ENCODE measurements at regions of chr2 and their contacts with region 1.

Region 1: DNA sequence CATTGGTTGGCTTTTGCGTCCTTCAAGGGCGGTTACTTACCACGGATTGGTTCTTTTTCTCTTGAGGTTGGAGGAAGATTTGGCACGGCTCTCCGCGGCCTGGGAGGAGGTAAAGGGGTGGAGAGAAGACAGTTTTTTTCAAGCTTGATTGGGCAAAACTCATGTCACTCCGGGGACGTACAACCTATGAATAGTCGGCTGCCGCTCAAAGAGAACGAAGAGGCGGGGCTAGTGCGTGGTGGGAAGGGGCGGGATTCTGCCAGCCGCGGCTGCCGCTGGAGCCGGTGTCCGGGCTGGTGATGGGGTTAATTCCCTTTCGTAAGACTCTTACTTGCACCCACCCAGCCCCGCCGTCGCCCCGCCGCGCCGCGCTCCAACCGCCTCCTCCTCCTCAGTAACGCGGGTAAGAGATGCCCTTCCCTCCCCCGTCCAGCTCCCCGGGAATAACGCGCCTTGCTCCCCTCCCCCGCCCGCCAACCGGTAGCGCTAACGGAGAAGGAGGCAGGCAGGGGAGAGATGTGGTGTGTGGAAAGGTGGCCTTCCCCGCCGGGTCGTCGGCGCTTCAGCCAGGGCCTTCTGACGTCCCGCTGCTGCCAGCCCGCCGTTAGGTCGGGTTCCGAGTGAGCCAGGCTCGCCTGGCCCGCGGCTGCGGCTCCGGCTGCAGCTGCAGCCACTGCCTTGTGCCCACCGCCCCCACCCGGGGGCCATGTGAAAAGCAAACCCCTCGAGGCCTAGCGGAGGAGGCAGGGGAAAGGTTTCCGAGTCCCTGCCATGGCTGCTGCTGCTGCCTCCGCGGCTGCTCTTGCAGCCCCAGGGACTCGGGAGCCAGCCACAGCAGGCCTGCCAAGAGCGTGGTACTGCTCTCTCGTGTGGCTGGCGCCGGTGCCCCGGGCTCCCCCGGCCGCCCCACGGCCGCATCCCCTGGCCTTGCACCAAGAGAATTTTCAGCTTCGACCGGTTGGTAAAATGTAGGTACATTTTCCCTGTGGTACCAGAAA is at the start of gene R3HDM1:
- DNase-seq: peak; percentile 95
- H3K4me3 Mint-ChIP-seq: no peak within 1 kb of the TSS
- H3K27ac Mint-ChIP-seq: peak within 1 kb of the TSS; percentile 83
- H3K4me1 Mint-ChIP-seq: peaks cover 17% of the 10 kb centered on the region
- H3K27me3 Mint-ChIP-seq: no peaks in the 10 kb centered on the region
- total RNA-seq, gene R3HDM1: 63.0 and 64.0 TPM in 2 replicates

Region 2: GRCh38 chr2:134918526-134919340 is 612.8 kb before region 1 on chr2 and contains the start of gene CCNT2:
- intact Hi-C with region 1: loop called (anchors 1 kb)
- DNase-seq: peak; percentile 100
- H3K4me3 Mint-ChIP-seq: peak within 1 kb of the TSS; percentile 96
- H3K27ac Mint-ChIP-seq: peak within 1 kb of the TSS; percentile 97
- H3K4me1 Mint-ChIP-seq: peaks cover 28% of the 10 kb centered on the region
- H3K27me3 Mint-ChIP-seq: peaks cover 11% of the 10 kb centered on the region
- total RNA-seq, gene CCNT2: 41.4 and 43.7 TPM in 2 replicates

Region 3: DNA sequence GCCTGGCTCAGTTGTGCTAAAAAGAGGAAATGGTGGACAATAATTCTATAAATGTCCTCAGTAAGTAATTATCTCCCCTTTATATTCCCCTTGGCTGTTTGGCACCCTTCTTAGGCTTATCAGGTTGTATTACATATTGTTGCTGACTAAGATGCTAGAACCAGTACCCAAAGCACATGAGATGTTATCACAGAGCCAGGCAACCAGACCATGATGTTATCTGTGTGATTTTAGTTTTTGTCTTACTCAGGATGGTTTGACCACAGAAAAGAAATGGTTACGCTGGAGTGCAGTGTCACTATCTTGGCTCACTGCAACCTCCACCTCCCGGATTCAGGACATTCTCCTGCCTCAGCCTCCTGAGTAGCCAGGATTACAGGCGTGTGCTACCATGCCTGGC is 14.9 kb after region 1 on chr2:
- intact Hi-C with region 1: no loop called
- DNase-seq: no peak
- H3K4me3 Mint-ChIP-seq: no peak overlapping the region
- H3K27ac Mint-ChIP-seq: no peak overlapping the region
- H3K4me1 Mint-ChIP-seq: peaks cover 13% of the 10 kb centered on the region
- H3K27me3 Mint-ChIP-seq: no peaks in the 10 kb centered on the region

Region 4: GRCh38 chr2:135664623-135665068 is 133.1 kb after region 1 on chr2:
- intact Hi-C with region 1: loop called (anchors 1 kb)
- DNase-seq: no peak
- H3K4me3 Mint-ChIP-seq: no peak overlapping the region
- H3K27ac Mint-ChIP-seq: peak overlapping the region; percentile 71
- H3K4me1 Mint-ChIP-seq: peaks cover 37% of the 10 kb centered on the region
- H3K27me3 Mint-ChIP-seq: no peaks in the 10 kb centered on the region

Region 5: DNA sequence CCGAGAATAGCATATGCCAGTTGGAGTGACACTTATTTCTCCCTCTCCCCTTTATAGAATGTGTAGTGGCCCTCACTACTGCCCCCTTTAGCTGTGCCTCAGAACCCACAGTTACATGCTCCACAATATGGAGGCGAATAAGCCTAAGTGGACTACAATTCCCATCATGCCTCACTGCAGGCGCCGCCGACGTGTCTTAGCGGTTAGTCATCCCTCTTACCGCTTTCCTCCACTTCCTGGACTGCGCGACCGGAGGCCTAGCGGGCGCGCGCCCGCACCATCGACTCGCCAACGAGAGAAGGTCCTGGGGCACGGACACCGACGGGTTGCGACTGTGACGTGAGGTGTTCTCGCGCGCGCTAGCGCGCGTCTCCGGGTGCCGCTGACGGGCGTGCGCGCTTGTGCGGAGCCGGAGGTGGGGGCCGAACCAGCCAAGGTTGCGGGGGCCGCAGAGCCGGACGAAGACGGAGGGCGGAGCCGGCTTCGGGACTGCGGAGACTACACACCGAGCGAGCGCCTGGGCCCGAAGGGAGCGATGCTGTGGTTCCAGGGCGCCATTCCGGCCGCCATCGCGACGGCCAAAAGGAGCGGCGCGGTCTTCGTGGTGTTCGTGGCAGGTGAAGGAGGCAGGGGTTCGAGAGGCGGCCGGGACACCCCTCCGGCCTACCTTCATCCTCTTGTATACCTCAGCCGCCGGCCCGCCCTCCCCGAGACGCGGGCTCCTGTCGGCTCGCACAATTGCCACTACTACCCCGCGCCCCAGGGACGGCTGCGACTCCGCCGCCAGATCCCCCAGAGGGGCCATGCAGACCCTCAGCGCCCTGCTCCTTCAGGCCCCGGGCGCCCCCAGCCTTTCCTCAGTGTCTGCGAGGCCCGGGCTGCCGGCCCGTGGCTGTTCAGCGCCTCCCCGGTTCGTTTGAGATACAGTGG is 210.1 kb after region 1 on chr2 and contains the start of gene UBXN4:
- intact Hi-C with region 1: loop called (anchors 1 kb)
- DNase-seq: peak; percentile 89
- H3K4me3 Mint-ChIP-seq: peak within 1 kb of the TSS; percentile 99
- H3K27ac Mint-ChIP-seq: peak within 1 kb of the TSS; percentile 100
- H3K4me1 Mint-ChIP-seq: peaks cover 36% of the 10 kb centered on the region
- H3K27me3 Mint-ChIP-seq: no peaks in the 10 kb centered on the region
- total RNA-seq, gene UBXN4: 115 and 121 TPM in 2 replicates

Region 6: DNA sequence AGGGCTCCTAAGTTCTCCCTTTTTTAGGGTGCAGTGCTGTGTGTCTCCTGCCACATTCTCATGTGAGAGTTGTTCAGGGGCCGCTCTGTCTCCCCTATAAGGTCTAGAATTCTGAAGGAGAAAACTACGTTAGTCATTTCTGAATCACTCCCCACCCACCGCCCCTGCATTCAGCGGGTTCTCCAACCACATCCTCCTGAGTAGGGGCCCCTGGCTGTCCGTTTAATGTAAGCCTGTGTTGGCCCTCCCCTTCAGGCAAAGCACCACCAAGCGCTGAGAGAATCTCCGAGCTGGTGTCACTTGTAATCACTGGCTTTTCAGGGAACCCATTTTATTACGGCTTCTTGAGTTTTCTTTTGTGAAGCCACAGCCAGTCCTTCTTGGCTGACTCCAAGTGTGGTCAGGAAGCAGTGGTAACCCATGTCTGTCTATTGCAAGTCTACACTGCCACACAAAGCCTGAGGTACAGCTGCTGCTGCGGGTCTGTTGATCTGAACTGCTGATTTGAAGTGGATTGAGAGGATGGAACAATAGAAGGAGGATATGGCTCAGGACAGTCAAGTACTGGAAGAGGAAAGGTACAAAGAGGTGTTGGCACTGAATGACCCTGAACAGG is 288.6 kb after region 1 on chr2:
- intact Hi-C with region 1: loop called (anchors 2 kb)
- DNase-seq: peak; percentile 75
- H3K4me3 Mint-ChIP-seq: peak overlapping the region; percentile 80
- H3K27ac Mint-ChIP-seq: peak overlapping the region; percentile 89
- H3K4me1 Mint-ChIP-seq: peaks cover 52% of the 10 kb centered on the region
- H3K27me3 Mint-ChIP-seq: no peaks in the 10 kb centered on the region

Measured in activated T-helper 1 cell treated with anti-CD3 and anti-CD28 coated beads, Interleukin-12 subunit alpha, Interleukin-12 subunit beta, Interleukin-2, Interleukin-4 antibody, amounts not matched to agents 30 ng/mL and 10 ng/mL and 1 ng/mL, durations not matched to agents 14 hours and 24 hours and 36 hours (primary cell).